ENCODE measurements at regions of chr13 and their contacts with region 1.

Region 1: DNA sequence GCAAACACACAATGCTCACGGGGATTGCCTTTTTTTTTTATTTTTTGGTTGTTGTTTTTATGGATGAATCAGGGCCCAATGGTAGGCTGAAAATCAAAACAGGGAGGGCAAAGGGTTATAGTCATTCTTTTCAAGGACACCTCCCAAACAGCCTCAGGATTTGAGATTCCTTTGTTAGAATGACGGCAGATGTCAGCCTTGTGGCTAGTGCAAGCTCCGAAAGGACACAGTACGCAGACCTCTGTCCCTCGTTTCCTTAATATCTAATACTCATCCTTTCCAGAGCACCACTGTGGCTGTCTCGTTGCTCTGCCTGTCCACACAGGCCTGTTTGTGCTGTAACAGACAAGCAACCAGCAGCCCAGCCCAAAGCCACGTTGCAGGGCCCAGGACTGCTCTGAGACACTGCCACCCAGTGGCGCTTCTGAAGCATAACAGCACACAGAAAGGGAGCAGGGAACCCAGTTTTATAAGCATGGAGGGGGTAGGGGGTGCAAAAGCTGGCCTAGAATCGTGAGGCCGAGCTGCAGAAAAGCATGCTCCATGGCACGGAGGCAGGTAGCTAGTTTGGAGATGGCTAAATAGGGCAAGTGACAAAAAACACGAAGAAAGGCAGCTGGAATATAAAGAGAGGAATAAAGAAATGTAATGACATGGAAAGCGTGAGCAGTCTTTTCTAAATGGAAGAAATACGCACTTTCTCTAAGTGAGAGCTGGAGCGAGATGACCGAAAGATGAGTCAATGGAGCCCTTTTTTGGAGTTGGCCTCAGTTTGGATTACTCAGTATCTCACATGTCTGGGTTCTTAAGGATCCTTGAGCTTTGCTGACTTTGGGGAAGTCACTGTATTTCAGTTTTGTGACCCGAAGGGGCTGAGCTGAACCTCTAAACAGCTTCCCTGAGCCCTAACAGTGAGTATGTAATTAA is 40.7 kb upstream of the MEDAG start:
- DNase-seq: peak; percentile 57 to 88 (median 84)
- H3K4me3 ChIP-seq: peak overlapping the region in 5 of 59 donors; percentile 2 to 15 (median 5)
- H3K27ac ChIP-seq: peak overlapping the region in 56 of 59 donors; percentile 6 to 91 (median 76)
- H3K27me3 ChIP-seq: no peaks in the 10 kb centered on the region
- CTCF ChIP-seq: peak; percentile 76 to 96 (median 90)

Region 2: DNA sequence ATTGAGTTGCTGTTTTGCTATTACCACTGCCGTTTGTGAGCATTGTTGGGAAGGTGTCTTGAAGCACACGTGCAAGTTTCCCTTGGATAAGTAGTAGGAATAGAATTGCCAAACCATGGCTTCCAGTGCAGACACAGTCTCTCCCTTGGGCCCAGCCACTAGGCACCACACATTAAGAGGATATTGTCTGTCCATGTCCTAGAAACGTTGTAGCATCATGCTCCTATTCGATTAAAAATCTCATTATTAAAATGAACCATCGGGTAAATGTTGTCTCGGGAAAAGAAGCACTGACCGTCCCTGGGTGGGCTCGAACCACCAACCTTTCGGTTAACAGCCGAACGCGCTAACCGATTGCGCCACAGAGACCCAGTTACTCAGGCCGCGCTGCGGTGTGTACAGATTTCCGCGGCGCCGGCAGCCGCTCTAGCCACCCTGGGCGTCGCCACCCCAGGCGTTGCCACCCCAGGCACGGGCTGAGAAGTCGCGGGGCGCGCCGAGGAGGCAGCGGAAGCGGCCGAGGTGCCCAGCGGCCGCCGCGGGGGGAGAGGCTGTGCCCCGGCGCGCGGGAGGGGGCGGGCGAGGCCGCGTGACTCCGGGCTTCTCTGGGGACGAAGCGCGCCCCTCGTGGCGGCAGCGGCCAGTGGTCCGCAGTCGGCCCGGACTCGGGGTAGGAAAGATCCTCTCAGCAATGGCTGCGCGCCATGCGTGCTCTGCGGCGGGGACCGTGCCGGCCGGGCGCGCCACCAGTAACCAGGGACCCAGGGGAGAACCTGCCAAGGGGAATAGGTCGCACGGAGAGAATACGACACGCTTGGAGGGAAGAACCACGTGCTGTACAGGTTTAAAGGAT is 191.5 kb before region 1 on chr13:
- intact Hi-C with region 1: loop called (anchors 5 to 10 kb)
- DNase-seq: peak; percentile 74 to 90 (median 86)
- H3K4me3 ChIP-seq: peak overlapping the region; percentile 33 to 77 (median 61)
- H3K27ac ChIP-seq: peak overlapping the region; percentile 27 to 91 (median 83)
- H3K27me3 ChIP-seq: no peaks in the 10 kb centered on the region
- CTCF ChIP-seq: peak; percentile 32 to 94 (median 76)

Region 3: GRCh38 chr13:30808589-30808988 is 56.8 kb before region 1 on chr13:
- intact Hi-C with region 1: loop called (anchors 2 to 5 kb)
- DNase-seq: no peak
- H3K4me3 ChIP-seq: no peak overlapping the region
- H3K27ac ChIP-seq: no peak overlapping the region
- H3K27me3 ChIP-seq: no peaks in the 10 kb centered on the region
- CTCF ChIP-seq: no peak

Region 4: GRCh38 chr13:30932481-30933353 is 67.3 kb after region 1 on chr13 and contains the start of gene TEX26:
- intact Hi-C with region 1: no loop called
- DNase-seq: peak in 2 of 10 donors; percentile 15 to 39
- H3K4me3 ChIP-seq: peak within 1 kb of the TSS in 57 of 59 donors; percentile 2 to 61 (median 36)
- H3K27ac ChIP-seq: peak within 1 kb of the TSS in 9 of 59 donors; percentile 3 to 40 (median 15)
- H3K27me3 ChIP-seq: peaks cover 0 to 7% (median 0%) of the 10 kb centered on the region in 45 donors
- CTCF ChIP-seq: no peak
- total RNA-seq, gene TEX26: 0.46 to 4.7 (median 1.6) TPM in 117 of 120 experiments, not detected in the others

Region 5: GRCh38 chr13:31044377-31045285 is 179.2 kb after region 1 on chr13:
- intact Hi-C with region 1: loop called (anchors 5 to 10 kb)
- DNase-seq: peak; percentile 70 to 88 (median 84)
- H3K4me3 ChIP-seq: no peak overlapping the region
- H3K27ac ChIP-seq: peak overlapping the region in 3 of 59 donors; percentile 14 to 38 (median 24)
- H3K27me3 ChIP-seq: peaks cover 0 to 5% (median 0%) of the 10 kb centered on the region in 45 donors
- CTCF ChIP-seq: peak; percentile 90 to 98 (median 96)